Tibial artery (tissue), 4 donors: ENCODE measurements at regions of chr17 and their contacts with region 1.

Region 1: DNA sequence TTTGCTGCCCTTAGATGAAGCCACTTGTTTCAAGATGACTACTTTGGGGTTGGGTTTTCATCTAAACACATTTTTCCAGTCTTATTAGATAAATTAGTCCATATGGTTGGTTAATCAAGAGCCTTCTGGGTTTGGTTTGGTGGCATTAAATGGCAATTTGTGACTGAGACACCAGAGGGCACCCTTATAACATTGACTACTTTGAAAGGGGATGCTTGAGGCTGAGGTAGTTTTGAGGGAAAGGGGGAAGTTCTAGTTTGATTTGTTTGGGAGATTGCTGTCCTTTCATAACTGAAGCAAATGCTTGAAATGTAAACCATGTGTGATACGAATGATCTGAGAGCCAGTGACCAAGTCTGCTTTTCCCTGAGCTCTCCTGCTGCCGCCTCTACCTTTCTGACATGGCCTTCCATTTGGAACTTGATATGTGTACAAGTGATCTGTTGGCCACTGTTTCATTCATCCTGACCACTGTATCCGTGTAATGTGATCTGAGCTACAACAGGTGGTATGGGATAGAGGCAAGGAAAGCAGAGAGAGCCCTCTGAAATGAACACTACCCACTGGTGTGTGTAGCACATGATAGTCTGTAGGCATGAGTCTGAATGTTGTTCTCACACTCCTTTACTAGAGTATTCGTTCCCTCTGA is 5.8 kb upstream of the RARA start:
- DNase-seq: peak in 1 of 2 donors; percentile 65
- H3K4me3 ChIP-seq: no peak overlapping the region
- H3K27ac ChIP-seq: no peak overlapping the region
- H3K4me1 ChIP-seq: peaks cover 0 to 32% (median 18%) of the 10 kb centered on the region in 4 donors
- H3K27me3 ChIP-seq: no peaks in the 10 kb centered on the region
- CTCF ChIP-seq: peak; percentile 75 to 88

Region 2: DNA sequence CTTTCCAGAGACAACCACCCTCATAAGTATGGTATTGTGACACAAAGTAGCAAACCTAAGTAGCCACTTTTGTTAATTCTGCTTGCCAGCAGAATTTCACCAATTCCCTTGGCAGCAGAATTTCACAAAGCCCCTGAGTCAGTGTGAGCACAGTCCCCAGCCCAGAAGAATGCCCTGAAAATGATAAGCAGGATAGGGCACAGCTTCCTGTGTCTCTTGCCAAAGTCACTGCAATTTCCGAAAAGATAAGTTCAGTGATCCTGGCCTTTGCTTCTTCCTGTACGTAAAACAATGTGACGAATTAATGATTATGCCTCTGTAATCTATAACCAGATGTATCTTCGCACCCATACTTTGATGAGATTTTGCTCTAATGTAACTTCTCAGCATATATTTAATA is 100.0 kb before region 1 on chr17:
- intact Hi-C with region 1: loop called (anchors 5 kb)
- DNase-seq: no peak
- H3K4me3 ChIP-seq: no peak overlapping the region
- H3K27ac ChIP-seq: no peak overlapping the region
- H3K4me1 ChIP-seq: peaks cover 0 to 5% (median 0%) of the 10 kb centered on the region in 4 donors
- H3K27me3 ChIP-seq: peaks cover 0 to 3% of the 10 kb centered on the region in 2 donors
- CTCF ChIP-seq: no peak

Region 3: GRCh38 chr17:40340880-40341807 is 38.0 kb after region 1 on chr17:
- intact Hi-C with region 1: no loop called
- DNase-seq: peak; percentile 94 to 98
- H3K4me3 ChIP-seq: peak overlapping the region; percentile 70 to 97
- H3K27ac ChIP-seq: peak overlapping the region; percentile 96
- H3K4me1 ChIP-seq: peaks cover 0 to 76% (median 59%) of the 10 kb centered on the region in 4 donors
- H3K27me3 ChIP-seq: no peaks in the 10 kb centered on the region
- CTCF ChIP-seq: peak; percentile 8 to 13